Activated T-helper 1 cell treated with anti-CD3 and anti-CD28 coated beads, Interleukin-12 subunit alpha, Interleukin-12 subunit beta, Interleukin-2, Interleukin-4 antibody, amounts not matched to agents 30 ng/mL and 10 ng/mL and 1 ng/mL, durations not matched to agents 14 hours and 24 hours and 36 hours (primary cell): ENCODE measurements at regions of chr4 and their contacts with region 1.

Region 1: GRCh38 chr4:112523764-112524505 is 8.0 kb upstream of the NEUROG2 start:
- DNase-seq: peak; percentile 70
- H3K4me3 Mint-ChIP-seq: peak overlapping the region; percentile 82
- H3K27ac Mint-ChIP-seq: no peak overlapping the region
- H3K4me1 Mint-ChIP-seq: peaks cover 49% of the 10 kb centered on the region
- H3K27me3 Mint-ChIP-seq: peaks cover 71% of the 10 kb centered on the region

Region 2: DNA sequence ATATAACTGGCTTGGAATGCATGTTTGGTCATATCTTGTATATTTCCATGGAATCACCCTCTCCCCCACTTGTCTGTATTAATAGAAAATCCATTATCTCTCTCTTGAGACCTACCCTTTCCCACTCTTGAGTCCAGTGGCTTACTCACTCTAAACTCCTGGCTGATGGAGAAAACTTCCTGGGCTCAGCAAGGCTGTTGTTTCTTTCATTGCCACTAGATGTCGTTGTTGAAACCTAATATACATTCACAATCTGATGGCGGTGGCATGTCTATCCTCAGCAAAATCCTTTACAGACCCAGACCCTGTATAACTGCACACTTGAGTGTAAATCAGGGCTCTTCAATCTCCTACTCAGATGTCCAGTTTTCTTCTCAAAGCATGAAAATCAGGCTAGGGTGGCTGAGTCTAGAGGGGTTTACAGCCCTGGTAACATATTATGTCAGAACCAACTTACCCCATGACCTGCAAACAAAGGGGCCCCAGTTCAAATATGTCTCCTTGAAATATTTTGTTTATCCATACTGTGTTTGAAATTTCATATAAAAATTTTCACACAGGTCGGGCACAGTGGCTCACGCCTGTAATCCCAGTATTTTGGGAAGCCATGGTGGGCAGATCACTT is 448.7 kb before region 1 on chr4:
- intact Hi-C with region 1: loop called (anchors 2 kb)
- DNase-seq: no peak
- H3K4me3 Mint-ChIP-seq: no peak overlapping the region
- H3K27ac Mint-ChIP-seq: no peak overlapping the region
- H3K4me1 Mint-ChIP-seq: no peaks in the 10 kb centered on the region
- H3K27me3 Mint-ChIP-seq: peaks cover 17% of the 10 kb centered on the region

Region 3: GRCh38 chr4:112214390-112215264 is 309.3 kb before region 1 on chr4:
- intact Hi-C with region 1: loop called (anchors 2 kb)
- DNase-seq: no peak
- H3K4me3 Mint-ChIP-seq: no peak overlapping the region
- H3K27ac Mint-ChIP-seq: no peak overlapping the region
- H3K4me1 Mint-ChIP-seq: peaks cover 9% of the 10 kb centered on the region
- H3K27me3 Mint-ChIP-seq: no peaks in the 10 kb centered on the region

Region 4: DNA sequence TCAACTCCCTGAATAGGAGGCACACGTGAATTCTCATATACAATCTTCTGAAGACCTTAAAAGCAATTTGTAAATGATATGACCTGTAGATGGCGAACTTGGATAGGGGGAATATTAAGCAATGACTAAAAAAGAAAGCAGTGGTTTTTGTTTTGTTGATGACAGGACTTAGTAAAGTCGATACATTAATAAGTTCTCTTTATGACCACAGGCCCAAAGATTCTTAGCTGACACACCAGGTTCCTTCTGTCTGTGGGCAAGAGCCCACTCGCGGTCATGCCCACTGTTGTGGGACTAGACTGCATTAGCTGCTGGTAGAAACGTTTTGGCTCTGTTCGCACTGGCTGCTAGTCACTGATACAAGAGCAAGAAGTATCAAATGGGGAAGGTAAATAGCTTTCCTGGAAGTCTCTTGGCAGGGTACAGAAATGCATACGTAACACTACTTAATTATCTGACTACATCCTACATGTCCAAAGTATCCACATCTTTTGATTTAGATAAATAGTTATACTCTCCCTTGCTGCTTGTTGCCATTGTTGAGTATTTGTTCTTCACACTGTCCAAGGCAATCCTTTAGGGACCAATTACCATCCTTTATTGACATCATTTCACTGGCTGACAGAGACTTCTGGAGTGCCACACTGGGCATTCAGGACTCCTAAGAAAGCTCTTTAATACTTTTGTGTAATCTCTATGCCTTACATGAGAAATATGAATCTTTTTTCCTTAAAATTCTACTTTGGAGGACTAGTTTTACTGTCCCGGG is 195.8 kb before region 1 on chr4:
- intact Hi-C with region 1: loop called (anchors 1 kb)
- DNase-seq: no peak
- H3K4me3 Mint-ChIP-seq: no peak overlapping the region
- H3K27ac Mint-ChIP-seq: no peak overlapping the region
- H3K4me1 Mint-ChIP-seq: peaks cover 8% of the 10 kb centered on the region
- H3K27me3 Mint-ChIP-seq: no peaks in the 10 kb centered on the region

Region 5: DNA sequence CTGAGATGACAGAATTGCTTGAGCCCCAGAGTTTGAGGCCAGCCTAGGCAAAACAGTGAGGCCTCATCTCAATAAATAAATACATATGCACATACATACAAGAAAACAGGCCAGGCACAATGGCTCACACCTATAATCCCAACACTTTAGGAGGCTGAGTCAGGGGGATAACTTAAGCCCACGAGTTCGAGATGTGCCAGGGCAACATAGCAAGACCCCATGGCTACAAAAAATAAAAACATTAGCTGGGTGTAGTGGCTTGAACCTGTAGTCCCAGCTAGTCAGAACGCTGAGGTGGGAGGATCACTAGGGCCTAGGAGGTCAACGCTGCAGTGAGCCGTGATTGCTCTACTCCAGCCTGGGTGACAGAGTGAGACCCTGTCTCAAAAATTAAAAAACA is 43.6 kb after region 1 on chr4:
- intact Hi-C with region 1: no loop called
- DNase-seq: no peak
- H3K4me3 Mint-ChIP-seq: no peak overlapping the region
- H3K27ac Mint-ChIP-seq: no peak overlapping the region
- H3K4me1 Mint-ChIP-seq: no peaks in the 10 kb centered on the region
- H3K27me3 Mint-ChIP-seq: no peaks in the 10 kb centered on the region

Region 6: GRCh38 chr4:112604589-112604988 is 80.7 kb after region 1 on chr4:
- intact Hi-C with region 1: loop called (anchors 2 kb)
- DNase-seq: peak; percentile 9
- H3K4me3 Mint-ChIP-seq: no peak overlapping the region
- H3K27ac Mint-ChIP-seq: no peak overlapping the region
- H3K4me1 Mint-ChIP-seq: no peaks in the 10 kb centered on the region
- H3K27me3 Mint-ChIP-seq: no peaks in the 10 kb centered on the region